CD4-positive, alpha-beta memory T cell (primary cell): ENCODE measurements at regions of chr2 and their contacts with region 1.

Region 1: DNA sequence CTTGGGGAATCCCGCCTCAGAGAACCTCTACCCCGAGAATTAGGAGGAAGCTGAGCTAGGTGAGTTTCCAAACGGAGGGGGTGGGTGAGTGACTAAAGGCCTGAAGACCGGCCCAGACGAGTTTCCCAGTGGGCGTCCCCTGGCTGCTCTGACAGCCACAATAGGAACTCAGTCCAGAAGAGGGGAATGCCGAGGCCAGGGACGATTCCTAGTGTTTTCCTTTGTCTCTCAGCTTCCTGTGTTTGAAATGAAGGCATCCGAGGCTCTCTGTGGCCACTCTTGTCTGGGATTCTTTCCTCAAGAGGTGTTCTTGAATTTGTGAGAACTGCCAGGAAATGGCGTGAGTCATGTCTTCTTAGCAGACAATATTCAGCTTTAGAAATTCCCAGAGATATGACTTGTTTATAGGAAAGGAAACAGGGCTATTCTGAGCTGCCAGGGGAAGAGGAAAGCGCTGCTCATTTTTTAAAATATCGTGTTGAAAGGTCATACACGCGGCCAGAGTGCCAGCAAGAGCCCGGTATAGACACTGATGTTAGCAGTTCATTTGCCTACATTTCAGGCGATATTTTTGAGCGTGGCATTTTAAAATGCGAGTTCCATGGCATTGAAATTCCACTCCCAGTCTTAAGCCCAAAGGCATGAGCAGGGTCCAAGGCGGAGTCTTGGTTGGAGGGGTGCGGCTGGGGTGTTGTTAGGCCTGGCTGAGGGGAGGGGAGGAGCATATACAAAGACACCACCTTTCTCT is 169.1 kb upstream of the KLF7 start:
- DNase-seq: no peak
- H3K4me3 ChIP-seq: no peak overlapping the region
- H3K4me3 Mint-ChIP-seq: peak overlapping the region; percentile 39 to 79 (median 69)
- H3K27ac ChIP-seq: no peak overlapping the region
- H3K27ac Mint-ChIP-seq: peak overlapping the region in 3 of 7 donors; percentile 25 to 72 (median 39)
- H3K4me1 ChIP-seq: peaks cover 45% of the 10 kb centered on the region
- H3K4me1 Mint-ChIP-seq: peaks cover 34 to 53% (median 40%) of the 10 kb centered on the region in 4 donors
- H3K27me3 ChIP-seq: no peaks in the 10 kb centered on the region
- H3K27me3 Mint-ChIP-seq: peaks cover 0 to 1% of the 10 kb centered on the region in 2 donors

Region 2: GRCh38 chr2:206981739-206982340 is 353.0 kb before region 1 on chr2:
- CTCF ChIA-PET with region 1: no interaction called
- POLR2A ChIA-PET with region 1: no interaction called
- intact Hi-C with region 1: loop called (anchors 10 kb)
- DNase-seq: peak; percentile 33 to 49 (median 39)
- H3K4me3 ChIP-seq: no peak overlapping the region
- H3K4me3 Mint-ChIP-seq: no peak overlapping the region
- H3K27ac ChIP-seq: no peak overlapping the region
- H3K27ac Mint-ChIP-seq: no peak overlapping the region
- H3K4me1 ChIP-seq: no peaks in the 10 kb centered on the region
- H3K4me1 Mint-ChIP-seq: peaks cover 0 to 6% (median 2%) of the 10 kb centered on the region in 4 donors
- H3K27me3 ChIP-seq: no peaks in the 10 kb centered on the region
- H3K27me3 Mint-ChIP-seq: peaks cover 0 to 2% of the 10 kb centered on the region in 2 donors

Region 3: GRCh38 chr2:207385903-207386302 is 51.1 kb after region 1 on chr2:
- CTCF ChIA-PET with region 1: no interaction called
- POLR2A ChIA-PET with region 1: no interaction called
- intact Hi-C with region 1: no loop called
- DNase-seq: no peak
- H3K4me3 ChIP-seq: no peak overlapping the region
- H3K4me3 Mint-ChIP-seq: no peak overlapping the region
- H3K27ac ChIP-seq: no peak overlapping the region
- H3K27ac Mint-ChIP-seq: no peak overlapping the region
- H3K4me1 ChIP-seq: no peaks in the 10 kb centered on the region
- H3K4me1 Mint-ChIP-seq: no peaks in the 10 kb centered on the region
- H3K27me3 ChIP-seq: no peaks in the 10 kb centered on the region
- H3K27me3 Mint-ChIP-seq: peaks cover 0 to 1% of the 10 kb centered on the region in 2 donors